ENCODE measurements at regions of chr19 and their contacts with region 1.

Region 1: DNA sequence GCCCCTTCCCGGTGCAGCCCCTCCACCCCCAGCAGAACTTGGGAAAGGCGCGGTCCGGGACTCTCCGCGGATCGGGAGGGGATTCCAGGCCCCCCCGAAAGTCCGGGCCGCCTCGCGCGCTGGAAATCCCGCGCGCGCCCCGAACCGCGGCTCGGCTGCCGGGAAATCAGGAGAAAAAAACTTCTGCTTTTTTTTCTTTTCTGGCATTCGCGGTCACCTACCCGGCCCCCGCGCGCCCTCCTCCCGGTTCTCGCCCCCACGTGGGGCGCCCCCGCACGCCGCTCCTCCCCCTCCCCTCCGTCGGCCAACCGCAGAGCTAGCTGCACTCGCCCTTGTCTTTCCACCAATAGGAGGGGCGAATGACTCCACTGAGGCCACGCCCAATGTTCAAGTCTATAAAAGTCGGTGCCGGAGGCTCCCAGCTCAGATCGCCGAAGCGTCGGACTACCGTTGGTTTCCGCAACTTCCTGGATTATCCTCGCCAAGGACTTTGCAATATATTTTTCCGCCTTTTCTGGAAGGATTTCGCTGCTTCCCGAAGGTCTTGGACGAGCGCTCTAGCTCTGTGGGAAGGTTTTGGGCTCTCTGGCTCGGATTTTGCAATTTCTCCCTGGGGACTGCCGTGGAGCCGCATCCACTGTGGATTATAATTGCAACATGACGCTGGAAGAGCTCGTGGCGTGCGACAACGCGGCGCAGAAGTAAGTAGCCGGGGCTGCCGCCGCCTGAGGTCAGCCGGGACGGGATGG is at the start of gene GADD45B:
- DNase-seq: peak; percentile 98
- H3K4me3 ChIP-seq: peak within 1 kb of the TSS; percentile 79 to 90
- H3K27ac ChIP-seq: peak within 1 kb of the TSS; percentile 75 to 84
- H3K4me1 ChIP-seq: peaks cover 3% of the 10 kb centered on the region
- H3K27me3 ChIP-seq: no peaks in the 10 kb centered on the region
- CTCF ChIP-seq: peak in 1 of 3 experiments; percentile 6
- POLR2A ChIP-seq: peak; percentile 100
- total RNA-seq, gene GADD45B: 30.5 to 59.7 TPM

Region 2: GRCh38 chr19:2543463-2544442 is 67.9 kb after region 1 on chr19:
- intact Hi-C with region 1: loop called (anchors 5 kb)
- DNase-seq: peak; percentile 94
- H3K4me3 ChIP-seq: no peak overlapping the region
- H3K27ac ChIP-seq: peak overlapping the region; percentile 61 to 88
- H3K4me1 ChIP-seq: peaks cover 61% of the 10 kb centered on the region
- H3K27me3 ChIP-seq: no peaks in the 10 kb centered on the region
- CTCF ChIP-seq: no peak
- POLR2A ChIP-seq: no peak

Region 3: DNA sequence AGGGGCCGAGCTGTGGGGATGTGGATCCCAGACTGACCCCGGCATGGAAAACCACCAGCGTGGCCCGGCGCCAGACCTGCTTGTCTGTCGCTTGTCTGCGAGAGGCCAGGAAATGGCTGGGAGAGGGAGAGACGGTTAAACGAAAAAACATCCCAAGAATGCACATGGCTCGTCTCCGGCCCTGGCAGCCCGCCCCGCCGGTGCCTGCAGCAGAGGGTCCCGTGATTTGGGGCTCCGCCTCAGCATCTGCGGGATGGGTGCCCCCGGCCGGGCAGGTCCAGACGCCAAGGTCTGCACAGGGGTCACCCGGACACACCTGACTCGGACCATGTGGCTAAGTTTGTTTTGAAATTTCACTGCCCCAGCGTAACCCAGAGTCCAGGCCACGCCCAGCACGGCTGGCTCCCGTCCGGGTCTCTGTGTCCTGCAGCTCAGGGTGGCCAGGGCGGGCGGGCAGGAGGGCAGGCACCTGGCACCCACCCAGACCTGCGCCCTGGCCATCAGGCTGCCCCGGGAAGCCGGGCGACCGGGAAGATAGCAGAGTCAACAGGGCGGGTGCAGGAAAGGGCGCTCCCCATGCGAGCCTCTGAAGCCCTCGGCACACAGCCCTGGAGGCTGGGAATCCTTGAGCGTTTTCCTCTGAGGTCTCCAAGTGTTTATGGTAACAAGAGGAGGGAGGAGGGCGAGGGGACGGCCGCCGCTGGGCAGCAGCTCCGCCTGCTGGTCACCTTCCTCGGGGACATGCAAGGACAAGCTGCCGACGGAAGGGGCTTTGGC is 103.2 kb after region 1 on chr19:
- intact Hi-C with region 1: loop called (anchors 2 kb)
- DNase-seq: peak; percentile 92
- H3K4me3 ChIP-seq: peak overlapping the region; percentile 35 to 37
- H3K27ac ChIP-seq: peak overlapping the region; percentile 51 to 68
- H3K4me1 ChIP-seq: peaks cover 18% of the 10 kb centered on the region
- H3K27me3 ChIP-seq: no peaks in the 10 kb centered on the region
- CTCF ChIP-seq: peak; percentile 87 to 96 (median 95)
- POLR2A ChIP-seq: no peak

Region 4: GRCh38 chr19:2610637-2611482 is 135.0 kb after region 1 on chr19:
- intact Hi-C with region 1: loop called (anchors 10 kb)
- DNase-seq: peak; percentile 95
- H3K4me3 ChIP-seq: peak overlapping the region; percentile 22 to 25
- H3K27ac ChIP-seq: peak overlapping the region; percentile 44 to 48
- H3K4me1 ChIP-seq: no peaks in the 10 kb centered on the region
- H3K27me3 ChIP-seq: no peaks in the 10 kb centered on the region
- CTCF ChIP-seq: peak; percentile 94 to 98 (median 97)
- POLR2A ChIP-seq: no peak

Measured in testis (tissue), 5 donors.